ENCODE measurements at regions of chrX and their contacts with region 1.

Region 1: DNA sequence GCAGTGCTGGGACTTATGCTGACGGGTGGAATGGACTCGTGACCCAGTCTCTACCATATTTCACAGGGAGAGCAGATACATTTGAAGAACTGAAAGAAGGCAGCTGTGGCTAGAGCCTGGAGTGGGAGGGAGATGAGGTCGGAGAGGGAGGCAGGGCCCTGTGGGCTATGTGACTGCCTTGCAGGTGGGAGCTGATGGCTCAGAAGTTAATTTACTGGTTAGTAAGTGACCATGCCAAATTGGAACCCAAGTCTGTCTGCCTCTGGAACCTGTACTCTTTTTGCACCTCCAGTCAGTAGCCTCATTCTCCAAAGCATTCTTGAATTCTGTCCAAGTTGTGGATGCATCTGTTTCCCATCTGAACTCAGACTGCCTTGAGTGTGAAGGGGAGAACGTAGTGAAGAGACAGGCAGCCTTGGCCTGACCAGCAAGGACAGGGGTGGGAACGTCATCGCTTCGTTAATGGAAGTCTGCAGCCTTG is 92.3 kb downstream of the REPS2 start:
- DNase-seq: no peak
- H3K4me3 Mint-ChIP-seq: no peak overlapping the region
- H3K27ac Mint-ChIP-seq: no peak overlapping the region
- H3K4me1 Mint-ChIP-seq: peaks cover 43% of the 10 kb centered on the region
- H3K27me3 Mint-ChIP-seq: no peaks in the 10 kb centered on the region
- CTCF ChIP-seq: no peak

Region 2: DNA sequence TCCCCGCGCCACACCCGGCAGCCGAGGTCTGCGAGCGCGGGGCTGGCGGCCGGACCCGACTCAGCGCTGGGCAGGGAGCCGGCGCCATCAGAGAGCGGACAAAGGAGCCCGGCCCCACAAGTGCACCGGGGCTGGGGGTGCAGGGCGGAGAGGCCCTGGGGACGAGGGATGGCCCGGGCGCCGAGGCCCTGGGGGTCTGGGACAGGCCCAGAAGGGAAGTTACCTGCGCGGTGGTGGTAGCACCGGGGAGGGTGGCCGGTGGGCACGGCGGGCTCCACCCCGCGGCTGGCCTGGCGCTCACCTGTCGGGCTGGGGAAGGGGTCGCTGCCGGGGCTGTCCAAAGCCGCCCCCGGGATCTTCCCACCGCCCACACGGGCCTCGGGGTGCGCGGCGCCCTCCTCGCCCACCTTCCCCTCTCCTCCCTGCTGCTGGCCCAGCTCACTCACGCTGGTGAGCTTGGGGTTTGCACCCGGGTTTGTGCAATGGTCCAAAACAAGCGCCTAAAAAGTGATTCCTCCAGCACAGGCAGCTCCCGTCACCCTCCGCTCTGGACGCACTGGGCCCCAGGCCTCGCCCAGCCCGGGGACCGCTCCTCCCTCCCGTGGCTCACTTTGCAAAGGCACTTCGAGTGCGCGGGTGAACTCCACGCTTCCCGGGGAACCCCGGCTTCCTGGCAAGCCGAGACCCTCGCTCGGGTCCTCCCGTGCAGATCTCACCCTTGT is 326.4 kb before region 1 on chrX and contains the start of gene CTPS2:
- CTCF ChIA-PET with region 1: no interaction called
- intact Hi-C with region 1: no loop called
- DNase-seq: peak; percentile 77
- H3K4me3 Mint-ChIP-seq: peak within 1 kb of the TSS; percentile 89
- H3K27ac Mint-ChIP-seq: peak within 1 kb of the TSS; percentile 82
- H3K4me1 Mint-ChIP-seq: peaks cover 24% of the 10 kb centered on the region
- H3K27me3 Mint-ChIP-seq: no peaks in the 10 kb centered on the region
- CTCF ChIP-seq: no peak
- total RNA-seq, gene CTPS2: 22.2 and 23.2 TPM in 2 replicates

Region 3: DNA sequence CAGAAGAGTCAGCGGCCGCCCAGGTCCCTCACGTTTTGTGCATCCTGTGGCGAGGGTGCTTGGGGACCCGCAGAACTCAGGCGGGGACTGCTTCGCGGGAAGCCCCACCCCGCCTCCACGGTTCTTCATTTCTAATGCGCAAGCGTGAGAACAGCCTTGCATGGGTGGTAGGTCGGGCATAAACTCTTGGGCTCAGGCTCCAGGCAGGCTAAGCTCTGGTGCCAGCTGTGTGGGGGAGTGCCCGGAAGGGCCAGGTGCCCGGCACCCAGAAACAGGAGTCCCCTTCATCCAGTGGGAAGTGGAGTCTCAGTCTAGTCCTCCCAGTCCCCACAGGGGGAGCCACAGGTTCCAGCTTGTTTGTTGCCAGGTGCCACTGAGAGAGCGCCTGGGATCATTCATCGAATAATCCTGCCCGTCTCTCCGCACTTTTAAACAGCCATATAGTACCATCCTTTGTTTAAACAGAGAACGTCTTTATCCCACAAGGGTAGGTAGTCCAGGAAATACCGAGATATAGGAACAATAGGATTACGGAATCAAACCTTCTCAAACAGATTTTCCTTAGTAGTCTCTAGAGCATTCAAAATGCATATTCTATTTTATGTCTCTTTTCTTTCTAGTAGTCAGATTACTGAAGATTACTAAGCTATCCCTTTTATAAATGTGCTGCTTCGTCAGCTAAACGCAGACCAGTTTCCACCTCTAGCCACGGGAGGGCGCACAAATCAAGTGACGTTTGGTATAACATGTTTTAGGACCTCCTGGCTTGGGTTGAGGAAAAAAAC is 155.8 kb before region 1 on chrX:
- CTCF ChIA-PET with region 1: interaction called, 11 read pairs
- intact Hi-C with region 1: no loop called
- DNase-seq: peak; percentile 76
- H3K4me3 Mint-ChIP-seq: peak overlapping the region; percentile 73
- H3K27ac Mint-ChIP-seq: peak overlapping the region; percentile 50
- H3K4me1 Mint-ChIP-seq: peaks cover 9% of the 10 kb centered on the region
- H3K27me3 Mint-ChIP-seq: no peaks in the 10 kb centered on the region
- CTCF ChIP-seq: peak; percentile 50

Region 4: GRCh38 chrX:16953606-16954220 is 85.0 kb before region 1 on chrX:
- CTCF ChIA-PET with region 1: no interaction called
- intact Hi-C with region 1: loop called (anchors 10 kb)
- DNase-seq: peak; percentile 45
- H3K4me3 Mint-ChIP-seq: peak overlapping the region; percentile 25
- H3K27ac Mint-ChIP-seq: peak overlapping the region; percentile 96
- H3K4me1 Mint-ChIP-seq: peaks cover 35% of the 10 kb centered on the region
- H3K27me3 Mint-ChIP-seq: no peaks in the 10 kb centered on the region
- CTCF ChIP-seq: no peak